ENCODE measurements at regions of chr6 and their contacts with region 1.

Region 1: DNA sequence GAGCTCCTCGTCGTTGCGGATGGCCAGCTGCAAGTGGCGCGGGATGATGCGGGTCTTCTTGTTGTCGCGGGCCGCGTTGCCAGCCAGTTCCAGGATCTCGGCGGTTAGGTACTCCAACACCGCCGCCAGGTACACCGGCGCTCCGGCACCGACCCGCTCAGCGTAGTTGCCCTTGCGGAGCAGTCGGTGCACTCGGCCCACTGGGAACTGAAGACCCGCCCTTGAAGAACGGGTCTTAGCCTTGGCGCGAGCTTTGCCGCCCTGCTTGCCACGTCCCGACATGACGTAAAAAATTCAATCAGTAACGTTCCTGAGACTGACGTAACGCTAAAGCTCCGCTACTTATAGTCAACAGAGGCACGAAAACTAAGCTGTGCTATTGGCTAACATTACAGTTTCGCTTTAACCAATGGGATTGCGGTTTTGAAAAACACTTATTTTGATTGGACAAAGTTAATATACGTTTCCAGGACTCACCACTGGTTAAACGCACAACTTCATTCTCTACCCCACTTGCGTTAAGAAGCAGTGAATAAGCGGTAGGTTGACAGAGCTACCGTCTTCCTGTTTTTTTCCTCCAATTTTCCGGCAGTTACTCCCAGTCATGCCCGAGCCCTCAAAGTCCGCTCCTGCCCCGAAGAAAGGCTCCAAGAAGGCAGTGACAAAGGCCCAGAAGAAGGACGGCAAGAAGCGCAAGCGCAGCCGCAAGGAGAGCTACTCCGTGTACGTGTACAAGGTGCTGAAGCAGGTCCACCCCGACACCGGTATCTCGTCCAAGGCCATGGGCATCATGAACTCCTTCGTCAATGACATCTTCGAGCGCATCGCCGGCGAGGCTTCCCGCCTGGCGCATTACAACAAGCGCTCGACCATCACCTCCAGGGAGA is 73.9 kb downstream of the OR2B2 start:
- DNase-seq: peak; percentile 97
- H3K4me3 ChIP-seq: peak overlapping the region; percentile 84 to 92 (median 92)
- H3K27ac ChIP-seq: peak overlapping the region; percentile 98
- H3K4me1 ChIP-seq: peaks cover 7% of the 10 kb centered on the region
- H3K27me3 ChIP-seq: no peaks in the 10 kb centered on the region
- CTCF ChIP-seq: no peak

Region 2: GRCh38 chr6:27575594-27576361 is 262.5 kb before region 1 on chr6:
- CTCF ChIA-PET with region 1: no interaction called
- dilution Hi-C with region 1: no loop called
- in situ Hi-C with region 1: no loop called
- intact Hi-C with region 1: no loop called
- DNase-seq: peak; percentile 52
- H3K4me3 ChIP-seq: no peak overlapping the region
- H3K27ac ChIP-seq: no peak overlapping the region
- H3K4me1 ChIP-seq: no peaks in the 10 kb centered on the region
- H3K27me3 ChIP-seq: no peaks in the 10 kb centered on the region
- CTCF ChIP-seq: no peak

Region 3: GRCh38 chr6:27864906-27865849 is 26.9 kb after region 1 on chr6:
- CTCF ChIA-PET with region 1: no interaction called
- dilution Hi-C with region 1: no loop called
- in situ Hi-C with region 1: loop called in 1 of 2 experiments (anchors 5 kb)
- intact Hi-C with region 1: loop called (anchors 1 kb)
- DNase-seq: peak; percentile 95
- H3K4me3 ChIP-seq: peak overlapping the region; percentile 54 to 81 (median 79)
- H3K27ac ChIP-seq: peak overlapping the region; percentile 81
- H3K4me1 ChIP-seq: peaks cover 14% of the 10 kb centered on the region
- H3K27me3 ChIP-seq: no peaks in the 10 kb centered on the region
- CTCF ChIP-seq: no peak

Region 4: GRCh38 chr6:27871924-27872638 is 33.8 kb after region 1 on chr6:
- CTCF ChIA-PET with region 1: no interaction called
- dilution Hi-C with region 1: no loop called
- in situ Hi-C with region 1: loop called in 1 of 2 experiments (anchors 5 kb)
- intact Hi-C with region 1: loop called (anchors 2 kb)
- DNase-seq: peak; percentile 94
- H3K4me3 ChIP-seq: peak overlapping the region; percentile 46 to 86 (median 63)
- H3K27ac ChIP-seq: peak overlapping the region; percentile 80
- H3K4me1 ChIP-seq: peaks cover 22% of the 10 kb centered on the region
- H3K27me3 ChIP-seq: no peaks in the 10 kb centered on the region
- CTCF ChIP-seq: peak; percentile 22 to 31

Region 5: DNA sequence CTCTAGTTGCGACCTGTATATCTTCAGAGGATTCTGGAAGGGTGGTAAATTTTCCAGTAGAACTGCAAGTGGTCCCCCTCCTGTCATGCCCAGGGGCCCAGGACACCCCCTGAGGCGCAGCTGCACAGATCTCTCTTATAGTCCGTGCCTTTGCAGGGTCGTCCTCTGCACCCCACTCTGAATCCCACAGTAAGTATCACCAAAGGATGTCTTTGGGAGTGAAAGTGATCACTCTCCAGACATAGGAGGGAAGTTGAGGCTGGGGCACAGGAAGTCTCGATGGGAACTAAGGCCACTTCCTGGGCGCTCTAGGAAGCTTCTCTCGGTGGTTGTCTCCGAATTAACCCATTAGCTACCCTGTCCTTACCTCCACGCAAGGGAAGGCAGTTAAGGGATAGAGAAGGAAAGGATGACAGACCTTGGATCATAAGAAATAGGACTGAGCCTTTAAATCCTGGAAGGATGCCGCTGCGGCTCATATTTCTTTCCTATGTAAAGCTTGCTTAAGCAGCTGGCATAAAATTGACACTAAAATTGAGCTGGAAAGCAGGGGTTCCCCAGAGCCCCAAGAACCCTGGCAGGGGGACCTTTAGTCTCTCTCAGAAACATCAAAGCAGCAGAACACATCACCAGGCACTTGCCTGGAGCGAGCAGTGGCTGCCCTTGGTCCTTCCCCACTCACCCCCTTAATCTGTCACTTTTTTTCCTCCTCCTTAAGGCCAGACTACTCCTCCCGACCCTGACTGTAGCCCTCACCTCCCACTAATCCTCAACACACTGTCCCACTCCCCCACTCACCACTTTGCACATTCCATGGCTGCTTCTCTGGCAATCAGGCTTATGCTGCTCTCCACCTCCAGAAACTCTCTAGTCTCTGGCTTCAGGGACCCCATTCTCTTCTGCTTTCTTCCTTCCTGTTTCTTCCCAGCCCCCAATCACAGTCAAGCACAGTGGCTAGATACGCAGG is 414.0 kb after region 1 on chr6 and contains the start of gene ZKSCAN4:
- CTCF ChIA-PET with region 1: no interaction called
- dilution Hi-C with region 1: no loop called
- in situ Hi-C with region 1: no loop called
- intact Hi-C with region 1: no loop called
- DNase-seq: peak; percentile 82
- H3K4me3 ChIP-seq: peak within 1 kb of the TSS; percentile 87 to 93 (median 89)
- H3K27ac ChIP-seq: peak within 1 kb of the TSS; percentile 8
- H3K4me1 ChIP-seq: peaks cover 8% of the 10 kb centered on the region
- H3K27me3 ChIP-seq: no peaks in the 10 kb centered on the region
- CTCF ChIP-seq: no peak
- total RNA-seq, gene ZKSCAN4: 3.6 to 5.8 TPM

Measured in mammary epithelial cell (primary cell).